ENCODE measurements at regions of chr7 and their contacts with region 1.

Region 1: DNA sequence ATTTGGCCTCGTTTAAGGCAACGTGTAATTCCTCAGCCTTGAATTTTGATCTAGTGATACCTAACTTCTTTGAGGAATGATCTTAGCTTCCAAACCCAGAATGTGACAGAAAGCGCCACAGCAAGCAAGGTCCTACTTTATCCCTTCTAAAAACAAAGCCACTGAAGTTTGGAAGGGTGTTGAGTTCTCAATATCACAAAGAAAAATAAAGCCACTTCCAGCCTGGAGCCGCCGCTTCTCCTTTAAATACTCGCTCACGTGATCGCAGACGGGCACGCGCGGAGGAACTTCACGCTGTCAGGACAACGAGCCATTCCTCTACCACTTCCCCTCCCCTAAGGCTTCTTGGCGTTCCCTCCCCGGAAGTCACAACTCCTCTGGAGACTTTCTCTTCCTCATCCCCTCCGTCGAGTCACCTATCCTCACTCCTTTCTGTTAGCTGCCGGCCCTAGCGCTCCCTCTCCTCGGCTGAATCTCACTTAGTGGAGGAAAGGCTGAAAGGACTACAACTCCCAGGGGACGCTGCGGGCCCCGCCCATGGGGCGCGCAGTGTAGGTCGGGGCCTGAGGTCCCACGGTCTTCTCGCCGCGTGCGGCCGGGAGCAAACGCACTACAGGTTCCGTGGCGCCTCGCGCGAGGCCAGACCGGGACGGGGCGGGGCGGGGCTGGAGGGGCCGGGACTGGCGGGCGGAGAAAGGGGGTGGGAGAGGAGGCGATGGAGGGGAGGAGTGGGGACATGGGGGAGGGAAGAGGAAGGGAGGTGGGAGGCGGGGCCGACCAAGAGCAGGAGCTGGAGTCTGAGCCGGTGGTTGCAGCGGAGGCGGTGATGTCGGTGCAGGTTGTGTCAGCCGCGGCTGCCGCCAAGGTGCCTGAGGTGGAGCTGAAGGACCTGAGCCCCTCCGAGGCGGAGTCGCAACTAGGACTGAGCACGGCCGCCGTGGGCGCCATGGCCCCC is at the start of gene AHCYL2:
- DNase-seq: peak; percentile 99
- ATAC-seq: peak; percentile 93
- H3K4me3 Mint-ChIP-seq: peak within 1 kb of the TSS; percentile 83
- H3K27ac Mint-ChIP-seq: peak within 1 kb of the TSS; percentile 95
- H3K4me1 Mint-ChIP-seq: peaks cover 30% of the 10 kb centered on the region
- H3K27me3 Mint-ChIP-seq: no peaks in the 10 kb centered on the region
- total RNA-seq, gene AHCYL2: 14.1 to 14.9 TPM

Region 2: GRCh38 chr7:128739048-128739962 is 485.2 kb before region 1 on chr7 and contains the start of gene CALU:
- CTCF ChIA-PET with region 1: no interaction called
- POLR2A ChIA-PET with region 1: no interaction called
- intact Hi-C with region 1: loop called in 1 of 2 experiments (anchors 1 kb)
- DNase-seq: peak; percentile 97
- ATAC-seq: peak; percentile 98
- H3K4me3 Mint-ChIP-seq: peak within 1 kb of the TSS; percentile 99
- H3K27ac Mint-ChIP-seq: peak within 1 kb of the TSS; percentile 93
- H3K4me1 Mint-ChIP-seq: peaks cover 38% of the 10 kb centered on the region
- H3K27me3 Mint-ChIP-seq: peaks cover 3% of the 10 kb centered on the region
- total RNA-seq, gene CALU: 32.9 to 33.8 TPM

Region 3: GRCh38 chr7:129054438-129055293 is 169.9 kb before region 1 on chr7 and contains the start of gene TNPO3:
- CTCF ChIA-PET with region 1: no interaction called
- POLR2A ChIA-PET with region 1: no interaction called
- intact Hi-C with region 1: loop called in 1 of 2 experiments (anchors 1 kb)
- DNase-seq: peak; percentile 94
- ATAC-seq: peak; percentile 91
- H3K4me3 Mint-ChIP-seq: peak within 1 kb of the TSS; percentile 89
- H3K27ac Mint-ChIP-seq: peak within 1 kb of the TSS; percentile 99
- H3K4me1 Mint-ChIP-seq: peaks cover 28% of the 10 kb centered on the region
- H3K27me3 Mint-ChIP-seq: peaks cover 3% of the 10 kb centered on the region
- total RNA-seq, gene TNPO3: 57.7 to 60.5 TPM

Region 4: GRCh38 chr7:129210256-129210988 is 14.1 kb before region 1 on chr7:
- CTCF ChIA-PET with region 1: no interaction called
- POLR2A ChIA-PET with region 1: no interaction called
- intact Hi-C with region 1: no loop called
- DNase-seq: peak; percentile 87
- ATAC-seq: peak; percentile 92
- H3K4me3 Mint-ChIP-seq: no peak overlapping the region
- H3K27ac Mint-ChIP-seq: no peak overlapping the region
- H3K4me1 Mint-ChIP-seq: no peaks in the 10 kb centered on the region
- H3K27me3 Mint-ChIP-seq: no peaks in the 10 kb centered on the region

Region 5: DNA sequence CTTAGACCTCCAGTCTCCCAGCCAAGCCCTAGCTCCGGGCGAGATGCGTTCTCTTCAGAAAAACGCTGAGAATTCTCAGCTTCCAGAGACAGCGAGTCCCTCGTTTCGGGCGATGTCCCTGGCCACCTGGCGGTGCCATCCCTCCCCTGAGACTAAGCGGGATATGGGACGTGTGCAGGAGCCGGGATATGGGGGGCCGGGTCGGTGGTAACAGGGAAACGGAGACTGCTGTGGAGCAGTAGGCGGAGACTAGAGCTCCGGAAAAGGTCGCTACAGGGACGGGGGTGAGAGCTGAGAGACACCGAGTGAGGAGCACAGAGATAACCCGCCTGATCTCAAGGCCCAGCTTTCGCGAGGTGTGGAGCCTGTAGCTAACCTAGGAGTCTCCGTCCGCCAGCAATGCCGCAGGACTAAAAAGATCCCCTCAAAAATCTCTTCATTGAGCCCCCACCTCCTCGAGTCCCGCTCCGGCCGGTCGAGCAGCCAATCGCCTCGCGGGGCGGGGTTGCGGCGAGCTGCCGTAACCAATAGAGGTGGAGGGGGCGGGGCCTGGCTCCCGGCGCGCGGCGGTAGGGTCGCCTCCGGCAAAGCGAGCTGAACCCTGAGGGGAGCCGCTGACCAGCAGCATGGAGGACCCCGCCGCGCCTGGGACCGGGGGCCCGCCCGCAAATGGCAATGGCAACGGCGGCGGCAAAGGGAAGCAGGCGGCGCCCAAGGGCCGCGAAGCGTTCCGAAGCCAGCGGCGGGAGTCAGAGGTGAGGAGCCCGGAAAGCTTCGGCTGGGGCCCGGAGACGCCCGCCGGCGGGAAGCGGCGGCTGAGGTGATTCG is 209.5 kb after region 1 on chr7 and contains the start of gene STRIP2:
- CTCF ChIA-PET with region 1: no interaction called
- POLR2A ChIA-PET with region 1: no interaction called
- intact Hi-C with region 1: loop called in 1 of 2 experiments (anchors 1 kb)
- DNase-seq: peak; percentile 96
- ATAC-seq: peak; percentile 80
- H3K4me3 Mint-ChIP-seq: peak within 1 kb of the TSS; percentile 90
- H3K27ac Mint-ChIP-seq: peak within 1 kb of the TSS; percentile 91
- H3K4me1 Mint-ChIP-seq: peaks cover 33% of the 10 kb centered on the region
- H3K27me3 Mint-ChIP-seq: peaks cover 7% of the 10 kb centered on the region
- total RNA-seq, gene STRIP2: 41.3 to 51.8 TPM

Region 6: DNA sequence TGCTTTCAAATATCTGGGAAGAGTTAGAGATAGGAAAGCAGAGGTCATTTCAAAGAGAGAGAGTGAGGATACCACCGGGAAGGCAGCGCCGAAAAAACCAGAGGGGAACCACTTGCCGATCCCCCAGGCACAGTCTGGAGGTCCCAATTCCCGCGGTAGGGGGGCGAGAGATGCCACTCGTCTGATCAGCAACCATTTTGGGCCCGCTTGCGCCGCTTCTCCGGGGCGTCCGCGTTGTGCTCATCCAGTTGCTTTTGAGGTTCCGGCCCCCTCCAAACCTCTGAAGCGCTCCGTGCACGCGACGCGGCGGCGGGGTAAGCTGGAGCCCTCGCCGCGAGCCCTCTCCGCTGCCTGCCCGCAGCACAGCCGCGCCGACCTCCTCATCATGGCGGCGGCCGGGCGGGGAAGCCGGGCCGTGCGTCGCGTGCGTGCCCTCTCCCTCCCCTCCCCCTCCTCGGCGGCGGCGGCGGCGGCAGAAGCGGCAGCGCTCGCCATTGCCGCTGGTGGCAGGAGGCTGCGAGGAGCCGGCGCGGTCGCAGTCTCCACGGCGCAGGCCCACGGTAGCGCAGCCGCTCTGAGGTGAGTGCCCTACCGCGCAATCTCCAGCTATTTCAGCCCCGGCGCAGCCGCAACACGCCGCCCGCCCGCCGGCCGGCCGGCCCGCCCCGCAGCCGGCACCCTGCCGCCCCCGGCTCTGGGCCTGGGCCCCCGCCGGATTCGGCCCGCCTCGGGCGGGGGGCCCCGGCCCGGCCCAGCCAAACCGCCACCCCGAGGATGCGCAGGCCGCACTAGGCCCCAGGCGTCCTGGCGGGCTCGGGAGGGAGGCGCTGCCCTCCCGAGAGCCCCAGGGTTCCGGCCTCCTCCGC is 387.0 kb after region 1 on chr7 and contains the start of gene NRF1:
- CTCF ChIA-PET with region 1: no interaction called
- POLR2A ChIA-PET with region 1: no interaction called
- intact Hi-C with region 1: loop called (anchors 1 to 10 kb)
- DNase-seq: peak; percentile 96
- ATAC-seq: peak; percentile 87
- H3K4me3 Mint-ChIP-seq: peak within 1 kb of the TSS; percentile 90
- H3K27ac Mint-ChIP-seq: peak within 1 kb of the TSS; percentile 96
- H3K4me1 Mint-ChIP-seq: peaks cover 61% of the 10 kb centered on the region
- H3K27me3 Mint-ChIP-seq: no peaks in the 10 kb centered on the region
- total RNA-seq, gene NRF1: 20.5 to 28.9 TPM

Region 7: GRCh38 chr7:129952653-129953560 is 728.4 kb after region 1 on chr7 and contains the start of gene UBE2H:
- CTCF ChIA-PET with region 1: no interaction called
- POLR2A ChIA-PET with region 1: no interaction called
- intact Hi-C with region 1: loop called in 1 of 2 experiments (anchors 1 kb)
- DNase-seq: peak; percentile 96
- ATAC-seq: peak; percentile 66
- H3K4me3 Mint-ChIP-seq: no peak within 1 kb of the TSS
- H3K27ac Mint-ChIP-seq: peak within 1 kb of the TSS; percentile 99
- H3K4me1 Mint-ChIP-seq: peaks cover 8% of the 10 kb centered on the region
- H3K27me3 Mint-ChIP-seq: no peaks in the 10 kb centered on the region
- total RNA-seq, gene UBE2H: 25.6 to 40.7 TPM

Region 8: GRCh38 chr7:131107337-131108211 is 1883.0 kb after region 1 on chr7:
- CTCF ChIA-PET with region 1: no interaction called
- POLR2A ChIA-PET with region 1: no interaction called
- intact Hi-C with region 1: loop called in 1 of 2 experiments (anchors 10 kb)
- DNase-seq: peak; percentile 83
- ATAC-seq: peak; percentile 47
- H3K4me3 Mint-ChIP-seq: peak overlapping the region; percentile 95
- H3K27ac Mint-ChIP-seq: peak overlapping the region; percentile 97
- H3K4me1 Mint-ChIP-seq: peaks cover 66% of the 10 kb centered on the region
- H3K27me3 Mint-ChIP-seq: no peaks in the 10 kb centered on the region

Measured in activated CD4-positive, alpha-beta T cell treated with anti-CD3 and anti-CD28 coated beads for 36 hours (primary cell).